AG04450 (cell line): ENCODE measurements at regions of chr2 and their contacts with region 1.

Region 1: DNA sequence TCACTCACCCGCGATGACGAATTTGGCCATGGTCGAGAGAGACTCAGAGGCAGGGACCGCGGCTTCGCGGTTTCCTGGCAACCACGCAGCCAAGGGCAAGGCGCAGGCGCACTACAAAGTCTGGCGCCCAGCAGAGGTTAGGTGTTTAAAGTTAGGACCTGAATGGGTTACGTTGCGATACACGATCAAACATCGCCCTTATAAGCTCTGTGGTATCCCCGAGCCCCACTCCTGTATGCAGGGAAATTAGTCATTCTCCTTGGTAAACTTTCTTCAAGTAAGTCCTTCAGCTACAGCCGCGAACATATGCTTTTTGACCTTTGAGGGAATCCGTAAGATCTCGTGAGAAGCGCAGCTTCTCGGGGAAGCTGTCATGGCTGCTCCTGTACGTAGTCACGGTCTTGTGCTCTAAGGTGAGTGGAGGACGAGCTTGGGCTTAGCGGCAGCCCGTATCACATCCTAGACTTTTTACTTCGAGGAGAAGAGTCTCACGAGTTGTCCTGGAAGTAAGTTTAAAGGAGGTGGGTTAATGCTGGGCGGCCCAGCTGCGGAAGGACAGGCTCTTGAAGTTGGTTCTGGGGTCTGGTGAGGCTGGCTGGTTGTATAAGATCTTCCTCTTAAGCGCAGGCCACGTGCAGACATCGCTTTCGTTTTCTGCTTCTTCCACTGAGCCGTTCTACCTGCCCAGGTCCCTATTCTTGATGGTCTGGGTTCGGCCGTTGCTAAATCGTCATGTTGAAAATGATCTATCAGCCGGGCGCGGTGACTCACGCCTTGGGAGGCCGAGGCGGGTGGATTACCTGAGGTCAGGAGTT is at the starts of genes FASTKD2 and MDH1B:
- DNase-seq: peak; percentile 85
- H3K4me3 ChIP-seq: peak within 1 kb of the TSS; percentile 87
- H3K27ac ChIP-seq: peak within 1 kb of the TSS; percentile 88
- H3K27me3 ChIP-seq: no peaks in the 10 kb centered on the region
- CTCF ChIP-seq: no peak
- polyA plus RNA-seq, gene FASTKD2: 26.8 and 37.2 TPM in 2 replicates
- polyA plus RNA-seq, gene MDH1B: 0.78 and 1.3 TPM in 2 replicates

Region 2: DNA sequence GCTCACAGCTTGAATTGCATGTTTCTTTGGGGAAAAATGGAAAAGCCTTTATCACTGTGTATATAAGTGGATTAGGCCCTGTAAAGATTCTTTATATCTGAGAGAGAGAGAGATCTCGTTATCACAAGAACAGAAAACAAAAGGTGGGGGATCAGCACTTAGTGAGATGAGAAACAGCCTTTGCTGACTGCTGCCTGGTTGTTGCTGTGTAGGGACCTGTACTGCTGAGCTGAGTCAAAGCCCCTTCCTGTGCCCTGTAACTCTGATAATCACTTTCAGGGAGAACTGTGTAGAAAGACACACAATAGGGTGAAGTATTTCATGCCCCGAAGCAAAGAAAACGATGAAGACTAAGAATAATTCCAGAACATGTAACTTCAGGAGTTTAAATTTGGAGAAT is 153.7 kb before region 1 on chr2:
- CTCF ChIA-PET with region 1: no interaction called
- POLR2A ChIA-PET with region 1: no interaction called
- DNase-seq: no peak
- H3K4me3 ChIP-seq: no peak overlapping the region
- H3K27ac ChIP-seq: no peak overlapping the region
- H3K27me3 ChIP-seq: no peaks in the 10 kb centered on the region
- CTCF ChIP-seq: no peak

Region 3: GRCh38 chr2:206683546-206683945 is 81.9 kb before region 1 on chr2:
- CTCF ChIA-PET with region 1: no interaction called
- POLR2A ChIA-PET with region 1: no interaction called
- DNase-seq: no peak
- H3K4me3 ChIP-seq: no peak overlapping the region
- H3K27ac ChIP-seq: no peak overlapping the region
- H3K27me3 ChIP-seq: no peaks in the 10 kb centered on the region
- CTCF ChIP-seq: no peak

Region 4: GRCh38 chr2:206713746-206714145 is 51.7 kb before region 1 on chr2:
- CTCF ChIA-PET with region 1: no interaction called
- POLR2A ChIA-PET with region 1: no interaction called
- DNase-seq: no peak
- H3K4me3 ChIP-seq: no peak overlapping the region
- H3K27ac ChIP-seq: no peak overlapping the region
- H3K27me3 ChIP-seq: no peaks in the 10 kb centered on the region
- CTCF ChIP-seq: no peak

Region 5: DNA sequence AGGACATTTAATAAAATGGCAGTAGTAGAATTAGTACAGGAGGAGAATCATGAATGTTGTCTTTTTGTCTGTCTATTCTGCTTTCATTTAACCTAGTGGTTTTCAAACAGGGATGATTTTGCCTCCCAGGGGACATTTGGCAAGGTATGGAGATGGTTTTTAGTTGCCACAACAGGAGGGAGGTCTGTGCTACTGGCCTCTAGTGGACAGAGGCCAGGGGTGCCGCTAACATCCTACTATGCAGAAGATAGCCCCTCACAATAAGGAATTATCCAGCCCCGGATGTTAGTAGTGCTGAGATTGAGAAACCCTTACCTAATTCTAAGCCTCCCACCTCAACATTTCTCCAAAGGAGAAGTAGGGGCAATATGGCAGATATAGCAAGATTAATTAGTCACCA is 18.3 kb after region 1 on chr2:
- CTCF ChIA-PET with region 1: interaction called, 78 read pairs
- POLR2A ChIA-PET with region 1: no interaction called
- DNase-seq: no peak
- H3K4me3 ChIP-seq: no peak overlapping the region
- H3K27ac ChIP-seq: no peak overlapping the region
- H3K27me3 ChIP-seq: no peaks in the 10 kb centered on the region
- CTCF ChIP-seq: peak; percentile 66

Region 6: GRCh38 chr2:206800506-206801417 is 35.3 kb after region 1 on chr2:
- CTCF ChIA-PET with region 1: interaction called, 11 read pairs
- POLR2A ChIA-PET with region 1: no interaction called
- DNase-seq: peak; percentile 26
- H3K4me3 ChIP-seq: no peak overlapping the region
- H3K27ac ChIP-seq: no peak overlapping the region
- H3K27me3 ChIP-seq: no peaks in the 10 kb centered on the region
- CTCF ChIP-seq: peak; percentile 66

Region 7: GRCh38 chr2:207188626-207189419 is 423.4 kb after region 1 on chr2:
- CTCF ChIA-PET with region 1: no interaction called
- POLR2A ChIA-PET with region 1: interaction called, 10 read pairs
- DNase-seq: no peak
- H3K4me3 ChIP-seq: no peak overlapping the region
- H3K27ac ChIP-seq: no peak overlapping the region
- H3K27me3 ChIP-seq: no peaks in the 10 kb centered on the region
- CTCF ChIP-seq: no peak